Activated B cell treated with CpG ODN at 0.5 μM for 24 hours (primary cell): ENCODE measurements at regions of chr21 and their contacts with region 1.

Region 1: GRCh38 chr21:35400233-35400957 is 351.3 kb upstream of the RUNX1 start:
- DNase-seq: peak; percentile 18
- ATAC-seq: peak; percentile 93
- H3K4me3 Mint-ChIP-seq: peak overlapping the region; percentile 0
- H3K27ac Mint-ChIP-seq: no peak overlapping the region
- H3K4me1 Mint-ChIP-seq: peaks cover 13% of the 10 kb centered on the region
- H3K27me3 Mint-ChIP-seq: peaks cover 8% of the 10 kb centered on the region
- CTCF ChIP-seq: no peak

Region 2: GRCh38 chr21:34693192-34693810 is 707.1 kb before region 1 on chr21:
- CTCF ChIA-PET with region 1: interaction called, 5 read pairs
- POLR2A ChIA-PET with region 1: no interaction called
- intact Hi-C with region 1: loop called (anchors 1 kb)
- DNase-seq: no peak
- ATAC-seq: no peak
- H3K4me3 Mint-ChIP-seq: no peak overlapping the region
- H3K27ac Mint-ChIP-seq: no peak overlapping the region
- H3K4me1 Mint-ChIP-seq: no peaks in the 10 kb centered on the region
- H3K27me3 Mint-ChIP-seq: peaks cover 13% of the 10 kb centered on the region
- CTCF ChIP-seq: peak; percentile 72

Region 3: GRCh38 chr21:34801519-34802132 is 598.8 kb before region 1 on chr21:
- CTCF ChIA-PET with region 1: interaction called, 8 read pairs
- POLR2A ChIA-PET with region 1: no interaction called
- intact Hi-C with region 1: loop called (anchors 1 kb)
- DNase-seq: no peak
- ATAC-seq: peak; percentile 83
- H3K4me3 Mint-ChIP-seq: no peak overlapping the region
- H3K27ac Mint-ChIP-seq: no peak overlapping the region
- H3K4me1 Mint-ChIP-seq: peaks cover 25% of the 10 kb centered on the region
- H3K27me3 Mint-ChIP-seq: no peaks in the 10 kb centered on the region
- CTCF ChIP-seq: no peak

Region 4: GRCh38 chr21:35198031-35198431 is 202.4 kb before region 1 on chr21:
- CTCF ChIA-PET with region 1: no interaction called
- POLR2A ChIA-PET with region 1: no interaction called
- intact Hi-C with region 1: no loop called
- DNase-seq: no peak
- ATAC-seq: no peak
- H3K4me3 Mint-ChIP-seq: no peak overlapping the region
- H3K27ac Mint-ChIP-seq: no peak overlapping the region
- H3K4me1 Mint-ChIP-seq: peaks cover 16% of the 10 kb centered on the region
- H3K27me3 Mint-ChIP-seq: no peaks in the 10 kb centered on the region
- CTCF ChIP-seq: no peak

Region 5: GRCh38 chr21:35226948-35227744 is 173.2 kb before region 1 on chr21:
- CTCF ChIA-PET with region 1: no interaction called
- POLR2A ChIA-PET with region 1: no interaction called
- intact Hi-C with region 1: loop called (anchors 5 kb)
- DNase-seq: no peak
- ATAC-seq: peak; percentile 86
- H3K4me3 Mint-ChIP-seq: peak overlapping the region; percentile 68
- H3K27ac Mint-ChIP-seq: peak overlapping the region; percentile 87
- H3K4me1 Mint-ChIP-seq: peaks cover 44% of the 10 kb centered on the region
- H3K27me3 Mint-ChIP-seq: peaks cover under 1% of the 10 kb centered on the region
- CTCF ChIP-seq: no peak

Region 6: DNA sequence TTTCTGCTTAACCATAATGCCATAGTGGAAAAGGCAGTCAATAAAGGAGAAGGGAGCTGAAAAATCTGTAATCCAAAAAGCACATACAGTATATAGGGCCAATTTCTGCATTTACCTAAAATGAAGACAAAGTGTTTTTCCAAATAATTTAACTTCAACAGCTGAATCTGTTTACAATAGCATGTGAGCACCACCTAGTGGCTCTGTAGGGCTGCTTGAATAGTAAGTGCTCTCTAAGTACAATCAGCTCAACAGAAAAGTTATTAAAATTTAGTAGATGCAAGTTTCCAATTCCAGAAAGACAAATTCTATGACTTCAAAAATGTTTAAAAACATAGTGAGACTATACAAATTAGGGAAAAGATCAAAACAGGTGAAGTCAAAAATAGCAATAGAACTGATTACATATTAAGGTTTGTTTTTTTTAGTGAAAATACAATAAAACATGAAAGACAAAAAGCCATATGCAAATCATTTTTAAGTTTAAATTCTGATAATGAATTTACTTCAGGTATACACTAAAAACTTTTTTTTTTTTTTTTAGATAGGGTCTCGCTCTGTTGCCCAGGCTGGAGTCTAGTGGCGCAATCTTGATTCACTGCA is 439.9 kb after region 1 on chr21:
- CTCF ChIA-PET with region 1: interaction called, 9 read pairs
- POLR2A ChIA-PET with region 1: no interaction called
- intact Hi-C with region 1: loop called (anchors 1 kb)
- DNase-seq: no peak
- ATAC-seq: no peak
- H3K4me3 Mint-ChIP-seq: no peak overlapping the region
- H3K27ac Mint-ChIP-seq: no peak overlapping the region
- H3K4me1 Mint-ChIP-seq: no peaks in the 10 kb centered on the region
- H3K27me3 Mint-ChIP-seq: peaks cover 6% of the 10 kb centered on the region
- CTCF ChIP-seq: peak; percentile 70